Left cardiac atrium (tissue), 4 donors: ENCODE measurements at regions of chr3 and their contacts with region 1.

Region 1: DNA sequence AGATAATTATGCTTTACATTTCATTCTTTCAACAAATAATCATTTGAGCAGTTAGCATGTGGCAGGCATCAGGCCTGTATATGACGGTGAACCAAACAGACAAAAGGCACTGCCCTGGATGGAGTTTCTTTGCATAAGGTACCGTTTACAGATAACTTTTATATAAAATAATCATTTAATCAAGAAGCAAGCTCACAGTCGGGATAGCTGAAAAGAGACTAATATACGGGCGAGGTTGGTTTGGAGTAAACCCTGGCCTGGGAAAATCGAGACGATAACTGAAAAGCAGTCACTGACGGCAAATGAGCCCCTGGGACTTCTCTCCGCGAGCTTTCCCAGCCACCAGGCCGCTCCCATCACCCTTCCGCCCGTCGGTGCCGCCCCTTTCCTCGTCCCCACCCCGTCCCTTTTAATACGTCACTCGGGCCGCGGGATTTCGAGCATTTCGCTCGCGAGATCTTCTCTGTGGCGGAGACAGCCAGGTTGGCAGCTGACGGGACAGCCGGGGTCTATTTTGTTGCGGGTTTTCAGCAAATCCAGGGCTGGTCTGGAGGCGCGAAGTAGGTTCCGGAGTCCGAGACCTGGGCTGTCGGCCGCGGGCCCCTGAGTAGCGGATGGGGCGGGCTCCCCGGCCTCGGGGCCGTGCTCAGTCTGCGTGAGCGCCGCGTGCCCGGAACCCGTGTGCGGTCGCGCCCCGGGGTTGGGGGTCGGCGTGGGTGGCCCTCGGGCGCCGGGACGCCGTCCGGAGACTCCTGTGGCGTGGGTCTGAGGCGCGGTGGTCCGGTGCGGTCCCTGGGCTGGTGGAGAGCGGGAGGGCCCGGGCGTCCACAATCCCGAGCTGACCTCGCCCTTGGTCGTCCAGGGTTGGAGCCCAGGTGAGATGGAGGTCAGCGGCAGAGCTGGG is at the start of gene NMD3:
- DNase-seq: peak; percentile 96
- ATAC-seq: peak; percentile 98
- total RNA-seq, gene NMD3: 42.3 to 66.4 TPM

Region 2: DNA sequence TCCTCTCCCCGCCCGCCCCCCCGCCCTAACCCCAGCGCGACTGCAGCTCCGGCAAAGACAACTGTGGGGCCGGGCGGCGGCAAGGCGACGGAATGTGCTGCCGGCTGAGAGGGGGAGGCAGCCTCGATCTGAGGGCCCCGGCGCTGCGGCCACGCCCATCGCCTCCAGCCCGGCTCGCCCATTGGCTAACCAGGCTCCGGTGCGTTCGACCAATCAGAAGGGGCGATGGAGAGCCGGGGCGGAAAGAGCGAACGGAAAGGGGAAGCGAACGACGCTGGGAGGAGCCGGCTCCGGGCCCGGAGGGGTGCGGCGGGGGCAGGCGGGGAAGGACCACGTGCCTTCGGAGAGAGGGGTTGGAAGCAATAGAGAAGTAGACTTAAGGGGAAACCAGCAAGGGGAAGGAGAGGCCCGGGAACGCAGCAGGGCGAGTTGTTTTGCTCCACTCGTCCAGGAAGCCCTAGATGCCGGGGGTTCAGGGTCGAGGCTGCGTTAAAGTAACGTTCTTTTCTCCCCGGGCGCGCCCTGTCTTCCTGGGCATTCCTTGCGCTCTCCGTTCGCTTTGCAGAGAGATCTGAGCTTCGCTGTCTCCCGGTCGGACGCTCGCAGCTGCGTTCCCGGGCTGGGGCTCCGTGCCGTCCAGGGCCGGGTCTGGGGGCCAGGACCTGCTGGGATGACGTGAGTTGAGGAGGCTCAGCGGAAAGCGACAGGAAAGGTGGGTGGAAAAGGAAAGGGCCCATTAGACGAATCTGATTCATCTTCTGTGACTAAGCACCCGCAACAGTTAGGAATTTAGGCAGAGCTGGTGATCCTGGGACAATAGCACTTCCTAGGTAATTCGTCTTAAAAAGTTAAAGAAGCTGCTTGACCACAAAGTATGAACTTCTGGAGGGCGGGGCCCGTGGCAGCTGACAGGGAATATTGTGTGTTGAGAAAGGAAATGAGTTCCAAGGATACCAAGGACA is 655.4 kb before region 1 on chr3 and contains the start of gene KPNA4:
- intact Hi-C with region 1: loop called in 1 of 2 experiments (anchors 5 kb)
- DNase-seq: peak; percentile 98
- ATAC-seq: peak; percentile 97 to 98
- total RNA-seq, gene KPNA4: 88.2 to 95.7 TPM

Region 3: DNA sequence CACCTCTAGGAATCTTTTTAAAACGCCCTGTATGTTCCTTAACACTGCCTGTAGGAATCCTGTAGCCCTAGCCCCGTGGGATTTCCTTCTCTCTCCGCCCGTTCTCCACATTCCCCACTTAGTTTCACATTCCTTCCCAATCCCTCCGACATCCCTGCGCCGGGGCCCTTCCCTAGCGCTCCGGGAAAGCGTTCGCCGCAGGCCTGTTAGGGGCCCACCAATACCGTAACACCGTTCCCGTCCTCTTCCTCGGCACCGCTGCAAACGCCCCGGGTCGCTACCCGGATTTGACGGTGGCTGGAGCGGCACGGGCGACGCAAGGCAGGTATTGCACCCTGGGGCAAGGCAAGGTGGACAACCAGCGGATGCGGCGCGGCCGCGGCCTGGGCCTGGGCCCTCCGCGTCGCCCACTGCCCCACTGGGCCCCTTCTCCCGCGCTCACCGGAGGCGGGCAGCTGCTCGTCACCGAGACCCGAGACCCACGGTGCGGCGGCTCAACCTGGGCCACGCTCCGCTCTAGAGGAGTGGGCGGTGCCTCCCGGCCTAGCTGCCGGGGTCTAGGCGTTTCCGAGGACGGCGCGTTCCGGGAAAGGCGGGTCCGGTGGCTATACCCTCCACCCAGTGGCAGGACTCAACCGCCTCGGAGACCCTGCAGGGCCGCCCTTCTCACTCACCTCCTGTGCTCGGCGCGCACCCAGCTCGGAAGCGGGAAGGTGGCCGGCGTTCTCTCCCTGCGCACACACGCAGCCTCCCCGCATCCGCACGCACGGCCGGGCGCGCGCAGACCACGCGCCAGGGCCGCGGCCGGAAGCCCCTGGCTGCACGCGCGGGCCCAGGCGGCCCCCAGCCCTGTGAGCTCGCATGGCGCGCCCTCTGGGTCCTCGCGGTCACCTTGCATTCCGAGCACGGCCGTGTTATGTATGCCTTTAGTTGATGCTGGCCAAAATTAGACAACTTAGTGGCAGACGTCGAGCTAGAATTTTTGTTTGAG is 116.2 kb before region 1 on chr3 and contains the start of gene B3GALNT1:
- intact Hi-C with region 1: loop called in 1 of 2 experiments (anchors 5 kb)
- DNase-seq: peak; percentile 71
- ATAC-seq: peak; percentile 83 to 90
- total RNA-seq, gene B3GALNT1: 47.6 to 57.9 TPM

Region 4: GRCh38 chr3:161336661-161337060 is 115.6 kb after region 1 on chr3:
- intact Hi-C with region 1: no loop called
- DNase-seq: no peak
- ATAC-seq: no peak